Activated B cell treated with CpG ODN at 0.5 μM for 24 hours (primary cell): ENCODE measurements at regions of chr6 and their contacts with region 1.

Region 1: GRCh38 chr6:157323255-157323965 is at the start of gene TMEM242:
- DNase-seq: peak; percentile 90
- ATAC-seq: peak; percentile 94
- H3K4me3 Mint-ChIP-seq: peak within 1 kb of the TSS; percentile 96
- H3K27ac Mint-ChIP-seq: peak within 1 kb of the TSS; percentile 92
- H3K4me1 Mint-ChIP-seq: peaks cover 19% of the 10 kb centered on the region
- H3K27me3 Mint-ChIP-seq: peaks cover 16% of the 10 kb centered on the region
- CTCF ChIP-seq: no peak
- total RNA-seq, gene TMEM242: 16.1 and 17.6 TPM in 2 replicates

Region 2: DNA sequence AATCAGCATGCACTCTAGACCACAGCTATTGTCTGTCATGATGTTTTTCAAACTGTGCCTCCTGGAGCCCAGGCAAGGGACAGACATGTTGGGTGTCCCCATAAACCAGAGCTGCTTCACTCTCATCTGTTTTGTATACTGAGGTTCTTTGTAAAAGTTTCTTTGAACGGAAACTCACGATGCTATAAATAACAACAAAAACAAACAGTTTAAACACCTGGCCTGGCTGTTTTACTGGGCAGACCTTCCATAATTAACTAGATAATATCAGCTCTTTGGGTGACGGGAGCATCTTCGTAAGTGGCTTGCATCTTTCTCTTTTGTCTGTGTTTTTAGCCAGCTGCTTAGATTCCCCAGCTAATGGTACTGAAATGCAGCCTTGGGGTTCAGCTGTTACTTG is 247.9 kb after region 1 on chr6:
- CTCF ChIA-PET with region 1: no interaction called
- POLR2A ChIA-PET with region 1: interaction called, 10 read pairs
- intact Hi-C with region 1: no loop called
- DNase-seq: no peak
- ATAC-seq: no peak
- H3K4me3 Mint-ChIP-seq: no peak overlapping the region
- H3K27ac Mint-ChIP-seq: peak overlapping the region; percentile 53
- H3K4me1 Mint-ChIP-seq: peaks cover 51% of the 10 kb centered on the region
- H3K27me3 Mint-ChIP-seq: no peaks in the 10 kb centered on the region
- CTCF ChIP-seq: no peak

Region 3: GRCh38 chr6:157597446-157598312 is 274.3 kb after region 1 on chr6:
- CTCF ChIA-PET with region 1: interaction called, 3 read pairs
- POLR2A ChIA-PET with region 1: no interaction called
- intact Hi-C with region 1: loop called (anchors 2 kb)
- DNase-seq: no peak
- ATAC-seq: peak; percentile 70
- H3K4me3 Mint-ChIP-seq: peak overlapping the region; percentile 46
- H3K27ac Mint-ChIP-seq: peak overlapping the region; percentile 71
- H3K4me1 Mint-ChIP-seq: peaks cover 54% of the 10 kb centered on the region
- H3K27me3 Mint-ChIP-seq: no peaks in the 10 kb centered on the region
- CTCF ChIP-seq: no peak

Region 4: GRCh38 chr6:157614026-157614568 is 290.7 kb after region 1 on chr6:
- CTCF ChIA-PET with region 1: interaction called, 4 read pairs
- POLR2A ChIA-PET with region 1: interaction called, 28 read pairs
- intact Hi-C with region 1: loop called (anchors 1 kb)
- DNase-seq: no peak
- ATAC-seq: peak; percentile 74
- H3K4me3 Mint-ChIP-seq: peak overlapping the region; percentile 41
- H3K27ac Mint-ChIP-seq: peak overlapping the region; percentile 85
- H3K4me1 Mint-ChIP-seq: peaks cover 67% of the 10 kb centered on the region
- H3K27me3 Mint-ChIP-seq: no peaks in the 10 kb centered on the region
- CTCF ChIP-seq: no peak